ENCODE measurements at regions of chr16 and their contacts with region 1.

Region 1: DNA sequence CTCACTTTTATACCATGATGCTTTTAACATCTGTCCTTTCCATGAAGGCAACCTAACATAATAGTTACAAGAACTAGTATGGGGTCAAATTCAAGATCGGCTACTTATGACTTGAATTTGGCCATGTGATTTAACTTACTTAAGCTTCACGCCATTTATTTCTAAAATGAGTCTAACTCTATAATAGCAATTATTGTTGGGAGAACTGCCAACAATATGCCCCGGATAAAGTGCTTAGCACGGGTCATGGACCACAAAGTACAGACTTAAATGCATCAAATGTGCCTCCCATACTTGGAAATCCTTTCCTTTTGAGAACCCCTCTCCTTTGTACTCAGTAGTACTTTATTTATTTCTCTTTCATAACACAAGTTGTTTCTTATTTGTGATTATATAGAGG is 1603.6 kb upstream of the GOT2 start:
- DNase-seq: no peak
- H3K4me3 ChIP-seq: no peak overlapping the region
- H3K27ac ChIP-seq: no peak overlapping the region
- H3K4me1 ChIP-seq: no peaks in the 10 kb centered on the region
- H3K27me3 ChIP-seq: no peaks in the 10 kb centered on the region
- CTCF ChIP-seq: no peak
- EP300 ChIP-seq: no peak
- POLR2A ChIP-seq: no peak

Region 2: GRCh38 chr16:59154295-59154694 is 1183.4 kb before region 1 on chr16:
- intact Hi-C with region 1: loop called in 1 of 4 experiments (anchors 10 kb)
- DNase-seq: no peak
- H3K4me3 ChIP-seq: no peak overlapping the region
- H3K27ac ChIP-seq: no peak overlapping the region
- H3K4me1 ChIP-seq: no peaks in the 10 kb centered on the region
- H3K27me3 ChIP-seq: no peaks in the 10 kb centered on the region
- CTCF ChIP-seq: no peak
- EP300 ChIP-seq: no peak
- POLR2A ChIP-seq: no peak

Measured in ovary (tissue), 10 donors.